ENCODE measurements at regions of chr1 and their contacts with region 1.

Region 1: GRCh38 chr1:156601122-156601830 is at the start of gene GPATCH4:
- DNase-seq: peak; percentile 87
- ATAC-seq: peak; percentile 90
- total RNA-seq, gene GPATCH4: 14.6 to 27.0 TPM

Region 2: DNA sequence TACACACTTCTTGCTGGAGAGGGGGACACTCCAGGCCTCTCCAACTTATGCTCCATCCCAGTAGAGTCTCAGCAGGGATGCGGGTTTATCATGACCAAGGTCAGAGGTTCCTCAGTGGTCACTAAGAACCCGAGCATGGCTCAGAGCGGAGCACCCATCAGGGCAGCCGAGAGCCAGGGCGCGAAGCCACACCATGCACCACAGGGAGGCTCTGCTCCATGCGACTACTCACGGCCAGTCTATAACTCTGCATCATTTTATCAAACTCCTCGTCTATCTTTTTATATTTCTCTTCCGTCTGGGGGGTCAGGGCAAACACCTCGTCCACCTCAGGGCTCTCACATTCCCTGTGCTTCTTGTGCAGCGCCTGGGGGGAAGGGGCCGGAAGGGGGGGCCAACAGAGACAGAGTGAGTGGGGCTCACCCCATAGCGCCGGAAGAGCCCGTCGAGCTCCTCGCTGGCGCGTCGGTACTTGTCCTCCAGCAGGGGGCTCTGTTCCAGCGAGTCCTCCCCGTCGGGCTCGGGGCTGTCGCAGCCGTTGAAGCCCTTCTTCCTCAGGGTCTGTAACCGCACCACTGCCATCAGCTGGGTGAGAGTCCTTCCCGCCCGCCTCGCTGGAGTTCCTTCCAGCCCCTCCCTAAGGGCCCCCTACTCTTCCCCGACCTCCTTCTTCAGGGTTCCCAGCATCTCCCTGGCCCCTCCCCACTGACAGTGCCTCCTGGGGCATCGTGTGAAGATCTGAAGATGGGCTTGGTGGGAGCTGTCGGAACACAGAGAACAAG is 120.7 kb before region 1 on chr1:
- intact Hi-C with region 1: loop called in 1 of 2 experiments (anchors 10 kb)
- DNase-seq: peak; percentile 71
- ATAC-seq: peak; percentile 34 to 45

Measured in left cardiac atrium (tissue), 4 donors.